A673 (cell line): ENCODE measurements at regions of chr7 and their contacts with region 1.

Region 1: DNA sequence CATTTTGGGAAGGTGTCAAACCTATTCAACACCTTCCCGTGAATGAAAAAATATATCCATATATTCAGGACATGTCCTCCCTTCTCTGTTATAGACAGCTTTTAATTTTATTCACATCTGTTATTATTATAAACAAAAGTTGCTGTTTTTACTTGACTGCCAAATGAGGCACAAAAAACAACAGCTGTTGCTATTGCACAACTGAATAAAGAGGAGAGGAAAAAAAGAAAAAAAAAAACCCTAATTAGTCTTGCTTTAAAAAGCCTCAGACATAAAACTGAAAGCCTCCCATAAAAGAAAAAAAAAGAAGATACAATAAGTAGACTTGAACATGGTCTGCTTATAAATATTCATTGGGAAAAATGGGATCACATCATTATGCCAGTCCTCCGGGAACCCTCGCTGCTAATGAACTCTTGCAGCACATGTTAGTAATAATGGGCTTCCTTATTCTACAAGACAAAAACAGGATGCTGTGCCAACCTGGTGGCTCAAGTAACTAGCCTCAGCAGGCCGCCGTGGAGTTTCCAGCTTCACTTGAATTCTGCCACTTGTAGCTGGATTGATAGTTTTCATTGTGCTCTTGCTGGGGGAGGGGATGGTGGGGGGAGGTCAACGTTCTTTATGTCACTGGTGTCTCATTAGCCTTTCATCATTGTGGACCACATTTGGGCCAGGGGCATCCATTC is 153.6 kb downstream of the BMPER start:
- DNase-seq: peak; percentile 98
- H3K4me3 ChIP-seq: no peak overlapping the region
- H3K27ac ChIP-seq: peak overlapping the region; percentile 88
- H3K4me1 ChIP-seq: peaks cover 70% of the 10 kb centered on the region
- H3K27me3 ChIP-seq: no peaks in the 10 kb centered on the region
- CTCF ChIP-seq: no peak

Region 2: GRCh38 chr7:33388332-33388731 is 670.6 kb before region 1 on chr7:
- CTCF ChIA-PET with region 1: no interaction called
- POLR2A ChIA-PET with region 1: no interaction called
- intact Hi-C with region 1: no loop called
- DNase-seq: no peak
- H3K4me3 ChIP-seq: no peak overlapping the region
- H3K27ac ChIP-seq: no peak overlapping the region
- H3K4me1 ChIP-seq: no peaks in the 10 kb centered on the region
- H3K27me3 ChIP-seq: no peaks in the 10 kb centered on the region
- CTCF ChIP-seq: no peak

Region 3: DNA sequence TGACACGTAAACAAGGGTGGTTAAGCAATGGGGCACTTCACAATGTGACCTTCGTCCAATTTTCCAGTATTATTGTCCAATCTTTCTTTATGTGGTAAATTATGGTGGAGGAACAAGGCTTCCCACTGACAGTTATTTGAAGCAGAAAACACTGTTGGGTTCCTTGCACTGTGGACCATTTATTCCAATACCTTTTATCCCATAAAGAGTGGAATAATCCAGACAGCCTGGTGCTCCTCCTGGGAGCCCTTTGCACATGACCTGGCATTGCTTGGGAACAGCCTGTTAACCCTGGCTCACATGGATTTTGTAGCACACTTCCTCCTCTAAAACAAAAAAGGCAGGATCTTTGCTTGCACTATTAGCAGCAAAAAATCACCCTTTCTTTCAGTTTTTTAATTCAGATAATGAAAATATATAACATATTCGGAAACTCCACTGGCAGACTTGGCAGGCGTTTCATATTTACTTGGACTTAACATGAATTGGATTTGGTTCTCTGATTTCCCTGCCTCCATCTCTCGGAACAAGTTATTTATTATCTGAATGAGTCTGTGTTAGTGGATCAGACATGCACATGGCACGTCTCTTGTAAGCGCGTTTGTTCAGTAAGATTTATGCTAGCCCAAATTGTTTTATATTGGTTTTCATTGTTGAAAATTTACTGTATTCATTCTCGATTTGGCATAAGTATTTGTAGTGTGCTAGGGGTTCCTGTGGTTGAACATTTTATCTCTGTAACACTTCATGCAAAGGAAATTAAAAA is 94.3 kb before region 1 on chr7:
- CTCF ChIA-PET with region 1: no interaction called
- POLR2A ChIA-PET with region 1: no interaction called
- intact Hi-C with region 1: no loop called
- DNase-seq: no peak
- H3K4me3 ChIP-seq: no peak overlapping the region
- H3K27ac ChIP-seq: no peak overlapping the region
- H3K4me1 ChIP-seq: peaks cover 12% of the 10 kb centered on the region
- H3K27me3 ChIP-seq: no peaks in the 10 kb centered on the region
- CTCF ChIP-seq: no peak

Region 4: DNA sequence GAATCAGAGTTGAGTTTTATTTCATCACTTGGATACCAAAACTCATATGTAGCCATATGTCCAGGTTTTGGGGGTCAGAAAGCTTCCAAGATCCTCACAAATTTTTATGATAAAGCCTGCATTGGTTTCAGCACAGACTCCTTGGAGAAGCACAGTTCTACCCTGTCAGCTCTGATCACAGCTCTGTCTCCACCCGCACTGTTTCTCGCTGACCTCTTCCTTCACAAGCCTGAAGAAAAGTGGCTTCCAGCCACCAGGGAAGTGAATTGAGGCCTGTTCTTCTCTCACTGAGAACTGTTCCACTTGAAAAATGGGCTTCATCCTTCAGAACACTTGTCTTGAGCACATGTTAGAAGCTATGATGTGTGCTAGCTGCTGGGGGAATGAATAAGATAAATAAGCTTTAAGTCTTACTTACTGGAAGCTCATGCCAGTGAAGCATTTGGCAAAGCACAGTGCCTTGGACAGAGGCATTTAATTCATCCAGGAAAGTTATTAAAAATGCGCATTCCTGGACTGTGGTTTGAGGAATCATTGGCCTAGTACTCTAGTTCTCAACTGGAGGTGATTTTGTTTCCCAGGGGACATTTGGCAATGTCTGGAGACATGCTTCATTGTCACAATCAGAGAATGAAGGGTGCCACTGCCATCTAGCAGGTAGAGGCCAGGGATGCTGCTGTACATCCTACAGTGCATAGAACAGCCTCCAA is 20.0 kb before region 1 on chr7:
- CTCF ChIA-PET with region 1: no interaction called
- POLR2A ChIA-PET with region 1: no interaction called
- intact Hi-C with region 1: no loop called
- DNase-seq: no peak
- H3K4me3 ChIP-seq: no peak overlapping the region
- H3K27ac ChIP-seq: peak overlapping the region; percentile 37
- H3K4me1 ChIP-seq: peaks cover 71% of the 10 kb centered on the region
- H3K27me3 ChIP-seq: no peaks in the 10 kb centered on the region
- CTCF ChIP-seq: no peak

Region 5: DNA sequence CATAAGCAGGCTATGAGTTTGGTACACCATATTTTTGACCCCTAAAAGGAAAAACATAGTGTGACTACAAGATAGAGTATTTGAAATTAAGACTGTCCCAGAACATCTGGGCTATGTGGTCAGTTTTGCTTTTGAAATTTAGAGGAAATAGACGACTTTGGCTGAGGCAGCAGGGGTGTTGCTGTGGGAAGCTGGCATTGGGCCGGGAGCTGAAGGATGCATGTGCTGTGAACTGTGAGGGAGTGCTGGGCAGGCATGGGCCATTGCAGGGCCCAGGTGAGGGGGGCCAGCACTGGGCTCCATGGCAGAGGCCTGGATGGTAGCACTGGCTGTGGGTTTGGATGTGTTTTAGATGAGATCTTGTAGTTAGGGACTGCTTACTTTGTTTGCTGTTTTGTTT is 14.7 kb after region 1 on chr7:
- CTCF ChIA-PET with region 1: interaction called, 10 read pairs
- POLR2A ChIA-PET with region 1: interaction called, 4 read pairs
- intact Hi-C with region 1: no loop called
- DNase-seq: no peak
- H3K4me3 ChIP-seq: no peak overlapping the region
- H3K27ac ChIP-seq: no peak overlapping the region
- H3K4me1 ChIP-seq: peaks cover 48% of the 10 kb centered on the region
- H3K27me3 ChIP-seq: no peaks in the 10 kb centered on the region
- CTCF ChIP-seq: no peak

Region 6: DNA sequence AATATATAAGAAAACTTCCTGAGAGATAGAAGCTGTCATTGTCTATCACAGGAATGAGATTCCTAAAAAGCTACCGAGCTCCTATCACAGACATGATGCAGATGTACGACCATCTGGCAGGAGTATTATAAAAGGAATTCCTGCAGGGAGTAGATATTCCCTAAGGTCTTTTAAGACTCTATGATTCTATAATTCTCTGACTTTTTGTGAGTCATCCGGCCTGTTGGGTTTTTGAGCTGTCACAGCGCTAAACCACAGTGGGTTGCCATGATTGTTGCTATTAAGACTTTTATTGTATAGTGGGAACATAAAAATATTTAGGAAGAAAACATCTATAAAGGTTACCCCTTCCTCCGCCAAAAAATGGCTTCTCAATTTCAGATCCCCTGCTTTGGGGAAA is 69.8 kb after region 1 on chr7:
- CTCF ChIA-PET with region 1: no interaction called
- POLR2A ChIA-PET with region 1: interaction called, 3 read pairs
- intact Hi-C with region 1: loop called (anchors 5 kb)
- DNase-seq: peak; percentile 90
- H3K4me3 ChIP-seq: no peak overlapping the region
- H3K27ac ChIP-seq: peak overlapping the region; percentile 9
- H3K4me1 ChIP-seq: peaks cover 37% of the 10 kb centered on the region
- H3K27me3 ChIP-seq: no peaks in the 10 kb centered on the region
- CTCF ChIP-seq: no peak